Activated CD4-positive, alpha-beta memory T cell treated with anti-CD3 and anti-CD28 coated beads, Interleukin-2, amount 10 ng/mL, durations not matched to agents 7 days and 5 days (primary cell): ENCODE measurements at regions of chr5 and their contacts with region 1.

Region 1: DNA sequence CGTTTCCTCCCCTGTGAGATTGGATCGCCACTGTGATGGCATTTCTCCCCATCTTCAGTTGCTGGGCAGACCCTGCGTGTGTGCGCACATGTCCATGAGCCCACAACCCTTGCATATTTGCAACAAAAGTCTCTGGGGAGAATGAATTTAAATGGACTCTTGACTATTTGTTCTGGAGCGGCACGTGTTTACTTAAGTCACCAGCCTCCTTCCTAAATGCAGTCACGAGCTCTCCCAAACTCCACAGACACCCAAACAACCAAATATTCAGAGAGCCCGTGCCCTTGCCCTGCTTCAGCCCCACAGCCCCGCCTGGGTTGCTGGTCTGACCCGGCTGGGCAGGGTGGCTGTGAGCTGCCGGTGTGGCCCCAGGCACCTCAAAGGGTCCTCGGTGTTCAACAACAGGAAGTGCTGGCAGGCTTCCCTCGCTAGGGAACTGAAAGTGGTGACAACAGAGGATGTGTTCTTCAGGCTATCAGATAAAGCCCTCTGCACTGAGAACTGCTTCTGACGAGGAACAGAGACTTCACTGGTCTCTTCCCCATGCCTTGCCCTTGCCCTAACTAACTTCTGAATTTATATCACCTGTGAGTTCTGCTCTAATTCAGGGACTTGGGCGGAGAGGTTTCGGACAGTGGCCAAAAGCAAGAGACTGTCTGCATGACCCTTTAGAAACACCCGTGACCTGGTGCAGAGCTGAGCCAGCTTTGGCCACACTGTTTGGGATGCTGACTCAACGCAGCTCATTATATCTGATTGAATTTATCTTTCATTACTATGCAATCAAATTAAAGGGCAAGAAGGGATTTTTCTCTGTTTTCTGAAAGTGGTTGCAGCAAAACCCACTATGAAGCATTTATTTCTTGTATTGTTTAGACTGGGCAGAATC is 19.2 kb upstream of the CD180 start:
- DNase-seq: peak; percentile 84
- H3K4me3 Mint-ChIP-seq: peak overlapping the region; percentile 75
- H3K27ac Mint-ChIP-seq: peak overlapping the region; percentile 99
- H3K4me1 Mint-ChIP-seq: peaks cover 67% of the 10 kb centered on the region
- H3K27me3 Mint-ChIP-seq: no peaks in the 10 kb centered on the region

Region 2: GRCh38 chr5:66821688-66822429 is 394.0 kb before region 1 on chr5:
- CTCF ChIA-PET with region 1: no interaction called
- POLR2A ChIA-PET with region 1: interaction called, 12 read pairs
- DNase-seq: peak; percentile 71
- H3K4me3 Mint-ChIP-seq: peak overlapping the region; percentile 63
- H3K27ac Mint-ChIP-seq: peak overlapping the region; percentile 94
- H3K4me1 Mint-ChIP-seq: peaks cover 56% of the 10 kb centered on the region
- H3K27me3 Mint-ChIP-seq: no peaks in the 10 kb centered on the region